ENCODE measurements at regions of chr9 and their contacts with region 1.

Region 1: GRCh38 chr9:99749641-99750040 is 72.0 kb upstream of the NR4A3 start:
- DNase-seq: peak; percentile 62 to 69
- H3K4me3 ChIP-seq: no peak overlapping the region
- H3K27ac ChIP-seq: no peak overlapping the region
- H3K4me1 ChIP-seq: peaks cover 5% of the 10 kb centered on the region; the same call in 1 of the 2 replicates
- H3K27me3 ChIP-seq: no peaks in the 10 kb centered on the region
- CTCF ChIP-seq: no peak

Region 2: GRCh38 chr9:99221621-99222415 is 527.8 kb before region 1 on chr9 and contains the starts of genes ALG2 and SEC61B:
- CTCF ChIA-PET with region 1: no interaction called
- POLR2A ChIA-PET with region 1: interaction called, 12 read pairs
- intact Hi-C with region 1: no loop called
- DNase-seq: peak; percentile 79 to 92
- H3K4me3 ChIP-seq: peak within 1 kb of the TSS; percentile 91
- H3K27ac ChIP-seq: peak within 1 kb of the TSS; percentile 83
- H3K4me1 ChIP-seq: peaks cover 26% of the 10 kb centered on the region
- H3K27me3 ChIP-seq: no peaks in the 10 kb centered on the region
- CTCF ChIP-seq: no peak; the same call in 1 of the 2 replicates
- total RNA-seq, gene ALG2: 30.2 and 32.6 TPM in 2 replicates
- total RNA-seq, gene SEC61B: 97.7 and 163 TPM in 2 replicates

Region 3: GRCh38 chr9:99778308-99778707 is 28.7 kb after region 1 on chr9:
- CTCF ChIA-PET with region 1: no interaction called
- POLR2A ChIA-PET with region 1: no interaction called
- intact Hi-C with region 1: no loop called
- DNase-seq: peak; percentile 18 to 70
- H3K4me3 ChIP-seq: no peak overlapping the region
- H3K27ac ChIP-seq: no peak overlapping the region
- H3K4me1 ChIP-seq: peaks cover 7% of the 10 kb centered on the region
- H3K27me3 ChIP-seq: no peaks in the 10 kb centered on the region
- CTCF ChIP-seq: no peak

Measured in PC-9 (cell line).